PC-9 (cell line): ENCODE measurements at regions of chr3 and their contacts with region 1.

Region 1: GRCh38 chr3:46442576-46443562 is 21.8 kb downstream of the LTF start:
- DNase-seq: peak; percentile 46 to 60
- H3K4me3 ChIP-seq: no peak overlapping the region
- H3K27ac ChIP-seq: no peak overlapping the region
- H3K4me1 ChIP-seq: peaks cover 8% of the 10 kb centered on the region; the same call in 1 of the 2 replicates
- H3K27me3 ChIP-seq: no peaks in the 10 kb centered on the region
- CTCF ChIP-seq: peak; percentile 77

Region 2: GRCh38 chr3:45938864-45939263 is 504.0 kb before region 1 on chr3:
- CTCF ChIA-PET with region 1: no interaction called
- POLR2A ChIA-PET with region 1: no interaction called
- intact Hi-C with region 1: loop called (anchors 5 kb)
- DNase-seq: peak; percentile 73
- H3K4me3 ChIP-seq: no peak overlapping the region
- H3K27ac ChIP-seq: no peak overlapping the region
- H3K4me1 ChIP-seq: peaks cover 8% of the 10 kb centered on the region; the same call in 1 of the 2 replicates
- H3K27me3 ChIP-seq: no peaks in the 10 kb centered on the region
- CTCF ChIP-seq: peak; percentile 86

Region 3: GRCh38 chr3:46208167-46208704 is 234.6 kb before region 1 on chr3 and contains the start of gene CCR1:
- CTCF ChIA-PET with region 1: no interaction called
- POLR2A ChIA-PET with region 1: no interaction called
- intact Hi-C with region 1: loop called (anchors 5 kb)
- DNase-seq: peak; percentile 52 to 68
- H3K4me3 ChIP-seq: no peak within 1 kb of the TSS
- H3K27ac ChIP-seq: peak within 1 kb of the TSS; percentile 27; the same call in 1 of the 2 replicates
- H3K4me1 ChIP-seq: peaks cover 14% of the 10 kb centered on the region
- H3K27me3 ChIP-seq: no peaks in the 10 kb centered on the region
- CTCF ChIP-seq: peak; percentile 77
- total RNA-seq, gene CCR1: 0.28 TPM in 1 of 2 replicates, not detected in the other

Region 4: DNA sequence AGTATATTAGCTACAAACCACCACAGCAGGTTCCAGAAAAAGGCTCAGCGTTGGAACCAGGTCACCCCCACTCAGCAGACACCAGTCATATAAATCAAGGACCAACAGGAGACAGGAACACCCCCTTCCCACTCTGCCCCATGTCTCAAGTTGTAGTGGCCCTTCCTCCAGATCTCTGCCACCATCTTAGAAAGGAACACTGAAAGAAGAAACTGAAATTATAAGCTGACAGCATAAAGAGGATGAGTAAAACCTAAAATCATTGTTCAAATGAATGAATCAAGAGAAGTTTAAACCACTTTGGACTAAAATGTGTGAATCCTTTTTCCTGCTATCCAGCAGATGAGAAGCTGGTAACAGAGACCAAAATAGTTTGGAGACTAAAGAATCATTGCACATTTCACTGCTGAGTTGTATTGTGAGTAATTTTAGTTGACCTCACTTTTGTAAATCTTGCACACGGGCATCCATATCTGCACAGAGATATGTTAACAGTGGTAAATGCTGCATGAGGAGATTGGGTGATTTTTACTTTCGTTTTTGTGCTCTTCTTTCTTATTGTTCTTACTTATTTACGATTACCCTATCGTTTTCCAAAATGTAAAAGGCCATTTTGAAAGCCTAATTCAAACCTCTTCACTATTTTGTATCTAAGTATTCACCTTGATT is 180.8 kb before region 1 on chr3:
- CTCF ChIA-PET with region 1: no interaction called
- POLR2A ChIA-PET with region 1: no interaction called
- intact Hi-C with region 1: no loop called
- DNase-seq: no peak
- H3K4me3 ChIP-seq: no peak overlapping the region
- H3K27ac ChIP-seq: no peak overlapping the region
- H3K4me1 ChIP-seq: no peaks in the 10 kb centered on the region
- H3K27me3 ChIP-seq: no peaks in the 10 kb centered on the region
- CTCF ChIP-seq: no peak

Region 5: GRCh38 chr3:46276502-46277099 is 166.3 kb before region 1 on chr3:
- CTCF ChIA-PET with region 1: no interaction called
- POLR2A ChIA-PET with region 1: no interaction called
- intact Hi-C with region 1: loop called (anchors 5 kb)
- DNase-seq: peak in 1 of 2 experiments; percentile 55
- H3K4me3 ChIP-seq: no peak overlapping the region
- H3K27ac ChIP-seq: no peak overlapping the region
- H3K4me1 ChIP-seq: peaks cover 3% of the 10 kb centered on the region; the same call in 1 of the 2 replicates
- H3K27me3 ChIP-seq: no peaks in the 10 kb centered on the region
- CTCF ChIP-seq: peak; percentile 56

Region 6: GRCh38 chr3:46334741-46335478 is 108.0 kb before region 1 on chr3:
- CTCF ChIA-PET with region 1: no interaction called
- POLR2A ChIA-PET with region 1: no interaction called
- intact Hi-C with region 1: no loop called
- DNase-seq: peak in 1 of 2 experiments; percentile 70
- H3K4me3 ChIP-seq: no peak overlapping the region
- H3K27ac ChIP-seq: peak overlapping the region; percentile 20; the same call in 1 of the 2 replicates
- H3K4me1 ChIP-seq: no peaks in the 10 kb centered on the region; the same call in 1 of the 2 replicates
- H3K27me3 ChIP-seq: no peaks in the 10 kb centered on the region
- CTCF ChIP-seq: no peak

Region 7: DNA sequence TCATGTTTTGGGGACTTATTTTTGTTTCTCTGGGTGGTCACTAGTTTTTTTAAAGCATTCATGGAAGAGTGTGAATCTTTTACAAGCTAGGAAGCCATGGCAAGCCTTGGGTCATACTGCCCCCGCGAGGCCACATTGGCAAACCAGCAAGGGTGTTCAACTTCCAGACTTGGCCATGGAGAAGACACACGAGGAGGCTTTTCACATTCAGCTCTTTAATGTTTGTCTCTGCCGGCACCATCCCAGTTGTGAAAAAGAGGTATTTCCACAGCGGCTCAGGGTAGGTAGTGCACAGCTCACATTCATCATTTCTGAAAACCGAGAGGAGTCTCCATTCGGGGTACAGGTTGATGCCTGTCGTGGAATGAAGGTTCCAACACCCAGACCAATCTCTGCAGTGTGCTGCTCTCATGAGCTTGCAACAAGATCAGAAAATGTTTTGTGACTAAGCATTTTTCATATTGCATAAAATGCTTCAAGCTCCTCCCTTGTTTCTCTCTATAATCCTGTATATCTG is 64.4 kb before region 1 on chr3:
- CTCF ChIA-PET with region 1: interaction called, 9 read pairs
- POLR2A ChIA-PET with region 1: interaction called, 3 read pairs
- intact Hi-C with region 1: loop called (anchors 2 kb)
- DNase-seq: peak; percentile 64 to 69
- H3K4me3 ChIP-seq: no peak overlapping the region
- H3K27ac ChIP-seq: no peak overlapping the region
- H3K4me1 ChIP-seq: peaks cover 27% of the 10 kb centered on the region
- H3K27me3 ChIP-seq: no peaks in the 10 kb centered on the region
- CTCF ChIP-seq: peak; percentile 76

Region 8: DNA sequence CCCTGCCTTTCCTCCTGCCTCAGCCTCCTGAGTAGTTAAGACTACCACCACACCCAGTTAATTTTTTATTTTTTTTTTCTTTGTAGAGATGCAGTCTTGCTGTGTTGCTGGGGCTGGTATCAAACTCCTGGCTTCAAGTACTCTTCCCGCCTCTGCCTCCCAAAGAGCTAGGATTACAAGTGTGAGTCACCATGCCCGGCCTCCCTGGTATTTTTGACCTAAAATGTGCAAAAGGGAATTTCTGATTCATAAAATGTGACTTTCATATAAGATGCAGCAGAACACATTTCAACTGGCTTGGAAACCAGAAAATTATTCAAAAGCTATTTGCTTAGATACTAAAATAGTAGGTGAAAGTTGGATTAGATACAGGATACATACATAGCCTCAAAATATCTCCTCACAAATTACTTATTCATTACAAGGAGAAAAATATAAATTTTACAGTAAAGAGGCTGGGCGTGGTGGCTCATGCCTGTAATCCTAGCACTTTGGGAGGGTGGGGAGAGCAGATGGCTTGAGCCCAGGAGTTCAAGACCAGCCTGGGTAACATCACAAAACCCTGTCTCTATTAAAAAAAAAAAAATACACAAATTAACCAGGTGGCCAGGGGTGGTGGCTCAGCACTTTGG is 1541.3 kb after region 1 on chr3:
- CTCF ChIA-PET with region 1: no interaction called
- POLR2A ChIA-PET with region 1: no interaction called
- intact Hi-C with region 1: no loop called
- DNase-seq: peak; percentile 25 to 54
- H3K4me3 ChIP-seq: no peak overlapping the region
- H3K27ac ChIP-seq: peak overlapping the region; percentile 43; the same call in 1 of the 2 replicates
- H3K4me1 ChIP-seq: peaks cover 11% of the 10 kb centered on the region
- H3K27me3 ChIP-seq: no peaks in the 10 kb centered on the region
- CTCF ChIP-seq: no peak